H1 (cell line): ENCODE measurements at regions of chr19 and their contacts with region 1.

Region 1: GRCh38 chr19:45092747-45093678 is at the start of gene PPP1R37:
- DNase-seq: peak; percentile 89 to 90
- H3K4me3 ChIP-seq: peak within 1 kb of the TSS; percentile 73 to 97 (median 86)
- H3K27ac ChIP-seq: peak within 1 kb of the TSS; percentile 98
- H3K4me1 ChIP-seq: peaks cover 6 to 25% (median 12%) of the 10 kb centered on the region in 4 experiments
- H3K27me3 ChIP-seq: no peaks in the 10 kb centered on the region
- CTCF ChIP-seq: peak in 2 of 3 experiments; percentile 5 to 20; a peak in 2 of 4 replicates
- EP300 ChIP-seq: peak; percentile 3 to 94; a peak in 2 of 3 replicates
- POLR2A ChIP-seq: no peak; a peak in 1 of 3 replicates
- RAD21 ChIP-seq: no peak
- total RNA-seq, gene PPP1R37: 25.7 and 27.0 TPM in 2 replicates

Region 2: GRCh38 chr19:45069056-45069455 is 24.0 kb before region 1 on chr19:
- CTCF ChIA-PET with region 1: interaction called, 4 read pairs
- POLR2A ChIA-PET with region 1: interaction called, 230 read pairs
- DNase-seq: no peak
- H3K4me3 ChIP-seq: no peak overlapping the region
- H3K27ac ChIP-seq: peak overlapping the region; percentile 10; the same call in 1 of the 2 replicates
- H3K4me1 ChIP-seq: no peaks in the 10 kb centered on the region
- H3K27me3 ChIP-seq: no peaks in the 10 kb centered on the region
- CTCF ChIP-seq: no peak
- EP300 ChIP-seq: no peak
- POLR2A ChIP-seq: no peak
- RAD21 ChIP-seq: no peak

Region 3: GRCh38 chr19:45079063-45079910 is 13.7 kb before region 1 on chr19 and contains the start of gene GEMIN7:
- CTCF ChIA-PET with region 1: interaction called, 39 read pairs
- POLR2A ChIA-PET with region 1: interaction called, 230 read pairs
- DNase-seq: peak in 1 of 2 experiments; percentile 92
- H3K4me3 ChIP-seq: peak within 1 kb of the TSS; percentile 87 to 98 (median 94)
- H3K27ac ChIP-seq: peak within 1 kb of the TSS; percentile 94
- H3K4me1 ChIP-seq: peaks cover 13 to 37% (median 20%) of the 10 kb centered on the region in 4 experiments
- H3K27me3 ChIP-seq: no peaks in the 10 kb centered on the region
- CTCF ChIP-seq: peak in 2 of 3 experiments; percentile 6 to 34; a peak in 3 of 4 replicates
- EP300 ChIP-seq: peak in 1 of 2 experiments; percentile 93; a peak in 1 of 3 replicates
- POLR2A ChIP-seq: peak in 1 of 2 experiments; percentile 51; a peak in 1 of 3 replicates
- RAD21 ChIP-seq: no peak; a peak in 1 of 4 replicates
- total RNA-seq, gene GEMIN7: 48.0 and 48.5 TPM in 2 replicates

Region 4: GRCh38 chr19:45110851-45111266 is 17.8 kb after region 1 on chr19:
- CTCF ChIA-PET with region 1: interaction called, 11 read pairs
- POLR2A ChIA-PET with region 1: interaction called, 70 read pairs
- DNase-seq: no peak
- H3K4me3 ChIP-seq: no peak overlapping the region
- H3K27ac ChIP-seq: no peak overlapping the region; the same call in 1 of the 2 replicates
- H3K4me1 ChIP-seq: peaks cover 0 to 6% (median 2%) of the 10 kb centered on the region in 4 experiments; a peak in 3 of 7 replicates
- H3K27me3 ChIP-seq: no peaks in the 10 kb centered on the region
- CTCF ChIP-seq: no peak
- EP300 ChIP-seq: no peak
- POLR2A ChIP-seq: no peak
- RAD21 ChIP-seq: no peak

Region 5: GRCh38 chr19:45115809-45116615 is 23.0 kb after region 1 on chr19:
- CTCF ChIA-PET with region 1: interaction called, 11 read pairs
- POLR2A ChIA-PET with region 1: interaction called, 30 read pairs
- DNase-seq: no peak
- H3K4me3 ChIP-seq: no peak overlapping the region
- H3K27ac ChIP-seq: no peak overlapping the region
- H3K4me1 ChIP-seq: peaks cover 0 to 21% (median 4%) of the 10 kb centered on the region in 4 experiments; a peak in 6 of 7 replicates
- H3K27me3 ChIP-seq: no peaks in the 10 kb centered on the region
- CTCF ChIP-seq: no peak
- EP300 ChIP-seq: no peak
- POLR2A ChIP-seq: no peak
- RAD21 ChIP-seq: peak; percentile 7 to 16; a peak in 2 of 4 replicates

Region 6: DNA sequence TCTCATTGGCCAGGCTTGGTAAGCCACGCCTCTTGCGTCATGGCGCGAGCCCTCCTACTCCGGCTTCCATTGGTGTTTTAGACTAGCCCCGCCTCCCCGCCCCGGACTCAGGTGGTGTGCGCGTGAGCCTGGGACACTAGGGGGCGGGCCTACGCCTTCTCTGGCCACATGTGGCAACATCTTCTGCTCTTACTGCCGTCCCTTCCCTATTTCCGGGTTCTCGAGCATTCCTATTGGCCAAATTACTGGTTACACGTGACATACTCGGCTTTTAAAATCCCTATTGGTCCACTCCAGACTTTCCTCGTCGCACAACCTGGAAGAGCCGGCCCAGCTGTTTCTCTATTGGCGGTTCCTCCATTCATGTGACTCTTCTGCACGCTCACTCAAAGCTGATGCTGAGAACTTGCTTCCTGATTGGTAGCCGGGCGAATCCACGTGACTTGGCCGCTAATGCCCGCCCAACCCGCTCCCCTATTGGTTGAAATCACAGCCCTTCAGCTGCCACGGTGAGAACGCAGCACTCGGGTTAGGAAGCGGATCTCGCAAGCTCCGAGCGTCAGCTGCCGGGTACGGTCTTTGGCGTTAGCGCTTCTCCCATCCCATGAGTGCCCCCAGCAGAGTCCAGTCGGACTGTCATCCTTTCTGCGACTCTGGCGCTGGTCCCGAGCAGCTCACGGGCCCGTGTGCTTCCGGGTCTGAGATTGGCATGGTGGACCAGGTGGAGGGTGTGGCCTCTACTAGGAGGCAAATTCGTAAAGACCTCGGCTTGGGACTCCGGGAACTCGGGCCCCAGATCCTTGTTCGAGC is 85.5 kb after region 1 on chr19 and contains the start of gene BLOC1S3:
- CTCF ChIA-PET with region 1: no interaction called
- POLR2A ChIA-PET with region 1: interaction called, 14 read pairs
- DNase-seq: peak; percentile 98 to 99
- H3K4me3 ChIP-seq: peak within 1 kb of the TSS; percentile 79 to 97 (median 93)
- H3K27ac ChIP-seq: peak within 1 kb of the TSS; percentile 82
- H3K4me1 ChIP-seq: peaks cover 0 to 5% (median 0%) of the 10 kb centered on the region in 4 experiments; a peak in 5 of 7 replicates
- H3K27me3 ChIP-seq: no peaks in the 10 kb centered on the region
- CTCF ChIP-seq: peak; percentile 19 to 70 (median 63); a peak in 3 of 4 replicates
- EP300 ChIP-seq: no peak
- POLR2A ChIP-seq: no peak
- RAD21 ChIP-seq: no peak
- total RNA-seq, gene BLOC1S3: 6.0 and 8.0 TPM in 2 replicates